H1 (cell line): ENCODE measurements at regions of chr4 and their contacts with region 1.

Region 1: DNA sequence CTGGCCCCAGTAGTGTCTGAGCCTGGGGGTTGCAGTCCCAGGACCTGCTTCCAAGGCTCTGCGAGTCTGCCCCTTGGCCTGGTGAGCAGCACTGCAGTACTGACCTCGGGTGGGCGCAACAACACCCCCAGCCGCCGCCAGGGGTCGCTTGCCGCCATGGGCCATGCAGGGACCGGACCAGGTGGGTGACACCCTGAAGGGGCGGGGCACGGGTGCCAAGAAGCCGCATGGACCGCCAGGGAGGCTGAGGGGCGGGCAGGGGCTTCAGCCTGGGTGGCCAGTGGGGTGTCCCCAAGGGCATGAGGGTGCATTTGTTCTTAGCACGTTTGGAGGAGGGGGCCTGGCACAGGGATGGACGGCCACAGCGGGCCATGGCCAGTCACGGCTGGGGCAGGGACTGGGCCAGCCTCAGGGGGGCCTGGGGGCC is 25.0 kb downstream of the TACC3 start:
- DNase-seq: peak; percentile 85 to 100
- H3K4me3 ChIP-seq: no peak overlapping the region
- H3K27ac ChIP-seq: no peak overlapping the region
- H3K4me1 ChIP-seq: peaks cover 0 to 8% (median 5%) of the 10 kb centered on the region in 4 experiments; a peak in 6 of 7 replicates
- H3K27me3 ChIP-seq: peaks cover 0 to 4% (median 0%) of the 10 kb centered on the region in 4 experiments; a peak in 2 of 7 replicates
- CTCF ChIP-seq: peak in 2 of 3 experiments; percentile 98 to 99; a peak in 3 of 4 replicates
- EP300 ChIP-seq: no peak
- POLR2A ChIP-seq: no peak
- RAD21 ChIP-seq: peak; percentile 83 to 90

Region 2: DNA sequence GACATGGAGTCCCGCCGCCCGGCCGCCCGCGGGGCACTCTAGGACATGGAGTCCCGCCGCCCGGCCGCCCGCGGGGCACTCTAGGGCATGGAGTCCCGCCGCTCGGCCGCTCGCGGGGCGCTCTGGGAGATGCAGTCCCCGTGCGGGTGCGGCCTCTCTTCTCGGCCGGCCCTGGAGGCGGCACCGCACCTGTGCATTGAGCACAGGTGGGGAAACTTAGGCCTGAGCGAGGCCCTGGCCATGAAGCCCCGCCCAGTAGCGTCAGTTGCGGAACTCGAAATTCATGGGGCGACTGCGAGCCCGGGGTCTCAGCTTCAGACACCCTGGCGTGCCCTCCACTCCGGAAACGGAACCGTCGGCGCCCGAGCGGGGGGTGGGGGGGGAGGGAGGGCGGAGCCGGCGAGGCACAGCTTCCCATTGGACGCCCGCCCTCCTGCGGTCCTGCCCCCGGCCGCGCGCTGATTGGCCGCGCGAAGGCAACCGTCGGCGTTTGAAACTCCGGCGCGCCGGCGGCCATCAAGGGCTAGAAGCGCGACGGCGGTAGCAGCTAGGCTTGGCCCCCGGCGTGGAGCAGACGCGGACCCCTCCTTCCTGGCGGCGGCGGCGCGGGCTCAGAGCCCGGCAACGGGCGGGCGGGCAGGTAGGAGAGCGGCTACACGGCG is 25.1 kb before region 1 on chr4 and contains the starts of genes TACC3 and TMEM129:
- CTCF ChIA-PET with region 1: interaction called, 20 read pairs
- POLR2A ChIA-PET with region 1: interaction called, 21 read pairs
- DNase-seq: peak; percentile 93
- H3K4me3 ChIP-seq: peak within 1 kb of the TSS; percentile 84 to 99 (median 96)
- H3K27ac ChIP-seq: peak within 1 kb of the TSS; percentile 69; the same call in 1 of the 2 replicates
- H3K4me1 ChIP-seq: peaks cover 0 to 19% (median 12%) of the 10 kb centered on the region in 4 experiments; a peak in 6 of 7 replicates
- H3K27me3 ChIP-seq: no peaks in the 10 kb centered on the region
- CTCF ChIP-seq: no peak
- EP300 ChIP-seq: peak in 1 of 2 experiments; percentile 12; a peak in 1 of 3 replicates
- POLR2A ChIP-seq: peak in 1 of 2 experiments; percentile 67; a peak in 1 of 3 replicates
- RAD21 ChIP-seq: no peak
- total RNA-seq, gene TACC3: 147 and 148 TPM in 2 replicates
- total RNA-seq, gene TMEM129: 28.5 and 31.5 TPM in 2 replicates

Region 3: DNA sequence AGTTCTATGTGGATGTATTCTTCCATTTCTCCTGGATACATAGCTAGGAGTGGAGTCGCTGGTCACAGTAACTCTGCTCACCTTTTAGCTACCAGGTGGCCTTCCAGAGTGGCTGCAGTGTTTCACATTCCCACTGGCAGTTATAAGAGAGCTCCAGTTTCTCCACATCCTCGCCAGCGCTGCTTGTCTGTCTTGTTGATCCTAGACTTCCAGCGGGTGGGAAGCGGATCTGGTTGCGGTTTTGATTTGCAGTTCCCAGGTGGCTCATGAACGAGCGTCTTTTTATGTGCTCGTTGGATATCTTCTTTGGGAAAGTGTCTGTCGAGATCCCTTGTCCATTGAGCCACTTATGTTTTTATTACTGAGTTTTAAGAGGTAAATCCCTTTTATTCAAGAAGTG is 13.4 kb before region 1 on chr4:
- CTCF ChIA-PET with region 1: interaction called, 32 read pairs
- POLR2A ChIA-PET with region 1: interaction called, 9 read pairs
- DNase-seq: no peak
- H3K4me3 ChIP-seq: no peak overlapping the region
- H3K27ac ChIP-seq: no peak overlapping the region
- H3K4me1 ChIP-seq: no peaks in the 10 kb centered on the region
- H3K27me3 ChIP-seq: no peaks in the 10 kb centered on the region
- CTCF ChIP-seq: no peak
- EP300 ChIP-seq: no peak
- POLR2A ChIP-seq: no peak
- RAD21 ChIP-seq: no peak

Region 4: DNA sequence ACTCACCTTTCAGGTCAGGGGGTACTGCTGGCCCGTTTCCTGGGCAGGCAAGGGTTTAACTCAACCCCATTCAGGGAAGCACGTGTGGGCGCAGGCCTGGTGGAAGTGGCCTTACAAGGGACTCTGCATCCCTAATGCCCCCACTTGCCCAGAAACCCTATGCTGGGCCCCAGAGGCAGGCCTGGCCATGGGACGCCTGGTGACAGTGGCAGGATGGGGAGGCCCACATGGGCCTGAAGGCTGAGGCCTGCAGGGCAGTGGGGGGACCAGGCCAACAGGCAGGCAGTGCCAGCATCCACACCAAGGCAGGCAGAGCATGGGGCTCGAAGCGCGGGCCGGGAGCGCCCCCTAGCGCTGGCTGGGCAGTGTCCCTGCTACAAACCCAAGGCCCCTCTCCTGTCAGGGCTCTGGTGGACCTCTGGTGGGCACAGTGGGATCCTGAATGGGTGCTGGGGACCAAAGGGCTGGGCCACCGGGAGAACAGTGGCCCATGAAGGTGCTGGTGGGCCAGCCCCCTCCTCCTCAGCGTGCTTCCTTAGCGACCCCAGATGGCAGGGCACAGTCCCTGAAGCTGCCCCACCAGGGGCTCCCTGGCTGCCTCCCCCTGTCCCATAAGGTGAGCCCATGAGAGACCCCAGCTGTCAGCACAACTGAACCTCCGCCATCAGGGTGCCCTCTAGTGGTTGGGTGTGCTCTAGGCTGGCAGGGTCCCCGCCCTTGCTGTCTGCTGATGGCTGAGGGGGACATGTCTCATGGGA is 63.7 kb after region 1 on chr4:
- CTCF ChIA-PET with region 1: interaction called, 2,507 read pairs
- POLR2A ChIA-PET with region 1: interaction called, 38 read pairs
- DNase-seq: peak; percentile 76 to 98
- H3K4me3 ChIP-seq: no peak overlapping the region
- H3K27ac ChIP-seq: no peak overlapping the region
- H3K4me1 ChIP-seq: no peaks in the 10 kb centered on the region; a peak in 1 of 7 replicates
- H3K27me3 ChIP-seq: no peaks in the 10 kb centered on the region
- CTCF ChIP-seq: peak in 2 of 3 experiments; percentile 95 to 98; a peak in 3 of 4 replicates
- EP300 ChIP-seq: no peak
- POLR2A ChIP-seq: peak in 1 of 2 experiments; percentile 36; a peak in 1 of 3 replicates
- RAD21 ChIP-seq: peak; percentile 95 to 98

Region 5: GRCh38 chr4:1883583-1883982 is 137.3 kb after region 1 on chr4:
- CTCF ChIA-PET with region 1: no interaction called
- POLR2A ChIA-PET with region 1: no interaction called
- DNase-seq: no peak
- H3K4me3 ChIP-seq: no peak overlapping the region
- H3K27ac ChIP-seq: no peak overlapping the region
- H3K4me1 ChIP-seq: no peaks in the 10 kb centered on the region; a peak in 2 of 7 replicates
- H3K27me3 ChIP-seq: no peaks in the 10 kb centered on the region
- CTCF ChIP-seq: no peak
- EP300 ChIP-seq: no peak
- POLR2A ChIP-seq: no peak
- RAD21 ChIP-seq: no peak

Region 6: DNA sequence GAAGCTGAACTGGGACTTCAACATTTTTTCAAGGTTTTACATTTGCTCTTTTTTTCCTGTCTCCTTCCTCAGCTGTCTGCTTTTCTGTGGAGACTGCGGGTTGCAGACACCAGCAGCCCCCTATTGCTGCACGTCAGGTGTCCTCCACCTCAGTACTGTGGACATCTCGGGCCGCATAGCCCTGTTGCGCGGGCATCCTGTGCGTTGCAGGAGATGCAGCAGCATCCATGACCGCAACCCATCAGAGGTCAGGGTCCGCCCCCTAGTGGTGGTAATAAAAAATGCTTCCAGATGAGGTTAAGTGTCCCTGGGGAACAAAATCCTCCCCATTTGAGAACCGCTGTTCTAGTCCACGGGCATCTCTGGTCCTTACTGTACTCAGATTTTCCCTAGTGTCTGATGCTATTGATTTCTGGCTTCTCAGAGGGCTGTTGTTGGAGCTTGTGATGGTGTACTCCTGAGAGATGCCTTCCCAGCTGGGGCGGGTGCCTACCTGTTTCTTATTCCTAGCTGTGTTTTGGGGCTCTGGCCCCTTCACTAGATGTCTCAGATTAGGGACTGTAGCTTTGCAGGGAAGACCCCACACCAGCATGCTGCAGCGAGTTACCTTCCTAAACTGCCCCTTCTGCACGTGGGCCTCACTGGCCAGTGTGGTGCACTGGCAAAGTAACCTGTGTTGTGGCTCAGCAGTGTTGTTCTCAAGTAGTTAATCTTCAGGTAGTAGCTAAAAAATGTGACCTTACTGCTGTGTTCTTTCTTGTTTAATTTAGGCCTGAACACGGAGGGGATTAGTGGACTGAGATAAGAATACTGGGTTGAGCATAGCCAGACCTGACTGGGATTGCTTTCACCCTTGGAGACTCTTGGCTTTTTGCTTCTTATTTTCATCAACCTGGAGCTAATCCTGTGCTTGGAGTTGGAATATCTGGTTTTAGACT is 153.1 kb after region 1 on chr4:
- CTCF ChIA-PET with region 1: interaction called, 34 read pairs
- POLR2A ChIA-PET with region 1: no interaction called
- DNase-seq: peak; percentile 53 to 82
- H3K4me3 ChIP-seq: no peak overlapping the region
- H3K27ac ChIP-seq: no peak overlapping the region
- H3K4me1 ChIP-seq: no peaks in the 10 kb centered on the region
- H3K27me3 ChIP-seq: no peaks in the 10 kb centered on the region
- CTCF ChIP-seq: peak; percentile 73 to 87 (median 83)
- EP300 ChIP-seq: no peak
- POLR2A ChIP-seq: no peak
- RAD21 ChIP-seq: peak; percentile 88 to 92